ENCODE measurements at regions of chr3 and their contacts with region 1.

Region 1: DNA sequence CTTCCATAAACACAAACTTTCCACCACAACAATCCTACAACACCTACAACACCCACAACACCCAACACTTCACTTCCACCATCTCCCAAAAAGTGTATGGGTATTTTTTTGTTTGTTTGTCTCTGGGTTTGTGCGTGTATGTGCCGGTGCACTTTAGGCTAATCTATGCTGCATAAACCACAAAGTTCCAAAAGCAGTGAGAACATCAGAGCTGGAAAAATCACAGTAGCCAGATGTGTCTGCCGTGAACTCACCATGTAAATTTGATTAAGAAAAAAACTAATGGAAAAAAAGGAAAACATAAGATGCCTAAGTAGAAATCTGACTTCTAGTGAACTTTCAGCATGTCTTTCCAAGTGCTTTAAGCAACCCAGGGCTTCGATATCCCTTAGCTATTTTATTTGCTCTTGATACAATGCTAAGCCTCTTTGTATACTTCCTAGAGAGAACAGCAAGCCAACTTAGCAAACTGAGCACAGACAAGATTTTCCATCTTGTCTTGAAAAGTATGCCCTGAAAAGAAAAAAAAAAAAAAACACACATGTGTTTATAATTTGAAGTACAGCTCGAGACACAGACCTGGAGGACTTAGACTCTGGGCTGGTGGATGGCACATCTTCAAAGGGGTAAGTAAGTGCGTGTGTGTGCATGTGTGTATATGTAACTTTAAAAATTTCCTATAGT is 91.4 kb downstream of the WWTR1 start:
- DNase-seq: no peak
- H3K4me3 ChIP-seq: no peak overlapping the region
- H3K27ac ChIP-seq: no peak overlapping the region
- H3K4me1 ChIP-seq: peaks cover 25% of the 10 kb centered on the region
- H3K27me3 ChIP-seq: no peaks in the 10 kb centered on the region
- CTCF ChIP-seq: no peak
- POLR2A ChIP-seq: no peak

Region 2: GRCh38 chr3:149536429-149536828 is 30.0 kb before region 1 on chr3:
- CTCF ChIA-PET with region 1: interaction called, 49 read pairs
- POLR2A ChIA-PET with region 1: no interaction called
- dilution Hi-C with region 1: no loop called
- intact Hi-C with region 1: no loop called
- DNase-seq: no peak
- H3K4me3 ChIP-seq: no peak overlapping the region
- H3K27ac ChIP-seq: peak overlapping the region; percentile 20
- H3K4me1 ChIP-seq: peaks cover 79% of the 10 kb centered on the region
- H3K27me3 ChIP-seq: no peaks in the 10 kb centered on the region
- CTCF ChIP-seq: no peak
- POLR2A ChIP-seq: no peak

Region 3: DNA sequence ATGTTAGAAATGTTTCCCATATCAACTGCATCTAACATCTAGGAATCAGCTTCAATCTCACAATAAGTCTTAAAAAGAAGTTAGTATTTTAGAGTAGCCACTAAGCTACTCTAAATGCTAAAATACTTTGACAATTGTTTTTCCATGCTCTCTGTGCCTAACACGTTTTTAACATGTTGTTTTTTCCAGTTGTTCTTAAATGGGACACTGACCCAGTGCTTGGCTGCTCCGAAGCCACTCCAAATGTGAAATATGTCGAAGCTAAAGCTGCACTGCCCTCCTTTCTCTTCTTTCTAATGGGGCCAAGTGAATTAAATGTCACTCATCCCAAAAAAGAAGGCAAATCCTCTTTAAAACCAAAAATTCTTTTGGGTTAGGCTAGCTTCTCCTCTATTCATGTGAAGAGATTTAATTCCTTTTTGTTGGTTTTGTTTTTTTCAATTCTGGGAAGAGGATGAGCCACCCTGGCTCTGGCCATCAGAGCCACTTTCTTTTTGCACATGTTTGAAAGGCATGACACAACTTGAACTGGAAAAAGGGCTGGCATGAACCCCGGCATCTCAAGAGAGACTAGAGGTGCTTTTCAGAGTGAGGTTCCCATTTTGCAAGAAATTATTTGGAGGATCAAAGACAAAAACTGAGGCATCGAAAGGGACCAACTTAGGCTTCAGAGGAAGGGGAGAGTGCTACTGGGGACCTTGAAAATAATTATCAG is 17.6 kb after region 1 on chr3:
- CTCF ChIA-PET with region 1: interaction called, 10 read pairs
- POLR2A ChIA-PET with region 1: interaction called, 3 read pairs
- dilution Hi-C with region 1: no loop called
- intact Hi-C with region 1: no loop called
- DNase-seq: no peak
- H3K4me3 ChIP-seq: no peak overlapping the region
- H3K27ac ChIP-seq: peak overlapping the region; percentile 45
- H3K4me1 ChIP-seq: peaks cover 92% of the 10 kb centered on the region
- H3K27me3 ChIP-seq: no peaks in the 10 kb centered on the region
- CTCF ChIP-seq: no peak
- POLR2A ChIP-seq: no peak

Region 4: DNA sequence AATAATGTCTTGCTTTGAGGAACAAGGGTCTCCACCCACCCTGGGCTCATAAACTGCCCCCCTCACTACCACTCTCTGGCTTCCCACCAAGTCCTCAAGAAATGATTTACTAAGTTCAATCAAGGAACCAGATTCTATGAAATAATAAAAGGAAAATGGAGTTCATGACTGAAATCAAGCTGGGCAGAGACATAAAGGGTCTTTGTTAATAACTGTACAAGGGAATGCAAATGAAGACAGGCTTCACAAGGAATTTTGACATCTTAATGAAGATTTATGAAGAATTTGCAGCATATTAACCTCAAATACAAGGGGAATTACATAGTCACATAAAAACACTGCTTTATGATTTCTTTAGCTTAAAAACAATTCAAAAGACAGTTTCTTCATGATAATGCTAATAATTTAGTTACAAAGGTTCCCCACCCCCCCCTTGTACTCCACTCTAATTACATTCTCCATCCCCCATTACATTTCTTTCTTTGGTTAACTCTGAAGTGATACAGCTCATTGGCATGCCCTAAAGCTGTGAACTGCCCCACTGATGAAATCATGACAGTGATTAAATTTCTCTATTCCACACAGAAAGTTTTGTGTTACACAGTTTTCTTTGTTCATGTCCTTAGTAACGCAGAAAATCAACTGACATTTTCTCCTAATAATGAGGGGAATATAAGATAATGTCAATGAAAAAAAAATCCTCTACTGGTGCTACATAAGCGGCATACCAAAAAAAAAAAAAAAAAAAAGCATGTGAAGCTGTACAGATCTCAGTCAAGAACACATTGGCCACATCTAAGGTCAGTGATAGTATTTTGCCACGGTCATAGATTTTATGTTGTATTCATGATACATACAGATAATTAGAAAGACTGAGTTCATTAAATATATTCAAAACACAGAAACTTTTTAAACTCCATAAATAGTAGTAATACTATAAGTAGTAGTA is 37.0 kb after region 1 on chr3:
- CTCF ChIA-PET with region 1: interaction called, 14 read pairs
- POLR2A ChIA-PET with region 1: no interaction called
- dilution Hi-C with region 1: no loop called
- intact Hi-C with region 1: no loop called
- DNase-seq: no peak
- H3K4me3 ChIP-seq: no peak overlapping the region
- H3K27ac ChIP-seq: peak overlapping the region; percentile 83
- H3K4me1 ChIP-seq: peaks cover 93% of the 10 kb centered on the region
- H3K27me3 ChIP-seq: no peaks in the 10 kb centered on the region
- CTCF ChIP-seq: no peak
- POLR2A ChIP-seq: no peak

Region 5: GRCh38 chr3:149621218-149622005 is 55.0 kb after region 1 on chr3:
- CTCF ChIA-PET with region 1: interaction called, 17 read pairs
- POLR2A ChIA-PET with region 1: no interaction called
- dilution Hi-C with region 1: no loop called
- intact Hi-C with region 1: no loop called
- DNase-seq: peak; percentile 90
- H3K4me3 ChIP-seq: peak overlapping the region in 1 of 3 experiments; percentile 13
- H3K27ac ChIP-seq: peak overlapping the region; percentile 99
- H3K4me1 ChIP-seq: peaks cover 75% of the 10 kb centered on the region
- H3K27me3 ChIP-seq: no peaks in the 10 kb centered on the region
- CTCF ChIP-seq: no peak
- POLR2A ChIP-seq: peak; percentile 47

Region 6: GRCh38 chr3:149765762-149766334 is 199.4 kb after region 1 on chr3:
- CTCF ChIA-PET with region 1: interaction called, 10 read pairs
- POLR2A ChIA-PET with region 1: no interaction called
- dilution Hi-C with region 1: no loop called
- intact Hi-C with region 1: loop called (anchors 5 kb)
- DNase-seq: peak; percentile 59
- H3K4me3 ChIP-seq: no peak overlapping the region
- H3K27ac ChIP-seq: no peak overlapping the region
- H3K4me1 ChIP-seq: no peaks in the 10 kb centered on the region
- H3K27me3 ChIP-seq: peaks cover 33 to 42% of the 10 kb centered on the region in 2 experiments
- CTCF ChIP-seq: peak; percentile 20 to 39
- POLR2A ChIP-seq: no peak

Region 7: DNA sequence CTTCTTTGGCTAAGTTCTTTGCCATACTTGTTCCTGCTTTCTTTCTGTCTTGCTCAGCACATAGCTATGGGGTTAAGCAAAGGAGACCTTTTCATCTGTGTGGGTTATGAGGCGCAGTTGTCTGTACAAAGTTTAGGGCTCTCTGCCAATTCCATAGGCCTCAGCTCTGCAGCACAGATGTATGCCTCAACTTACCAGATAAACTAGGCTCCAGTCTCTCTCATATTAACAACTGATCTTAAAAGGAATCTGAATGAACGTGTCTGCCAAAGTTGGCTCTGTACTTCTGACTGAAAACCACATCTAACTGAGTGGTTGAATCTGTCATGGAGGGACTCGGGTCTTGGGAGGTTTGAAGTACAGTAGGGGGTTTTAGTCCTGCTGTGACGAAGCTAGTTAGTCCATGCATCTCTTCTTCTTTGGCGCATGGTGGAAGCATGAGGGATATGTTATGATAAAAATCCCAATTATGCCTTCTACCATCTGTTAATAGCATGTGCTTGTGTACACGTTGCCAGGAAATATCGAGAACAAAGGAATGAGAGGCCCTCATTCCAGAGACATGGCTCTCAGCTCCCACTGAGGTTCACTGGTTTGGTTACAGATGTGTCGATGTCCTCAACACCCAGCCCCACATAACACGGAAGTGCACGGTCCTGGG is 727.1 kb after region 1 on chr3:
- CTCF ChIA-PET with region 1: no interaction called
- POLR2A ChIA-PET with region 1: no interaction called
- dilution Hi-C with region 1: no loop called
- intact Hi-C with region 1: no loop called
- DNase-seq: no peak
- H3K4me3 ChIP-seq: no peak overlapping the region
- H3K27ac ChIP-seq: no peak overlapping the region
- H3K4me1 ChIP-seq: no peaks in the 10 kb centered on the region
- H3K27me3 ChIP-seq: no peaks in the 10 kb centered on the region
- CTCF ChIP-seq: no peak
- POLR2A ChIP-seq: no peak